Colonic mucosa (tissue), 4 donors: ENCODE measurements at regions of chr3 and their contacts with region 1.

Region 1: GRCh38 chr3:132730891-132731580 is 8.8 kb upstream of the NPHP3 start:
- DNase-seq: no peak
- H3K4me3 ChIP-seq: no peak overlapping the region
- H3K27ac ChIP-seq: no peak overlapping the region
- H3K4me1 ChIP-seq: no peaks in the 10 kb centered on the region
- H3K27me3 ChIP-seq: no peaks in the 10 kb centered on the region
- CTCF ChIP-seq: no peak

Region 2: DNA sequence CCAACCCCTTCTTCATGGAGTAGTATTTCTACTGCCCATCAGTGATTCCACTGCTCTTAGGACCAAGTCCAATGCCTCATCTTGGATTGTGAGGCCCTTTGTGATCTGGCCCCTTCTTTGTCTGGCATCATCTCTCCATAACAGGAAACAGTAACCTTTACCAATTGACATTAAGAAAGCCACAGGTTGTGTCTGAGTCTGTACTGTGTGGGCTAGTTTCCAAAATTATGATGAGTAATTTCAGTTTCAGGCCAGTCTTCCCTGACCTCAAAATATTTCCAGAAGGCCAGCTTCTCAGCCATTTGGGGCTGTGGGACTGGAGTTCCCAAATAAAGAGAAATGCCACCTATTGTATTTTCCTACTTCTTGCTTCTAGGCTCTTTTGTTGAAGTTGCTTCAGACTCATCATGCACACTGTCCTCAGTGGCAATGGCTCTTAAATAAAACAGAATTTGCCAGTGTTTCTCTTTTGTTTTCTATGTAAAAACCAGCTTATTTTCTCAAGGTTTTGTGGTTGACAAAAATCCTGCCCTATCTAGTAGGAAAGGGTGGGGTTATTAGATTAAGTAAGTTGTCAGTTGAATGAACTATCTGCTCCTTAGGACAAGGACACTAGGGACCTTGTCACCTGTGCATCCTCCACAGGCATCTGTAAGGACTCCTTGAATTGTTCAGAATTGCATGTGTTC is 181.0 kb before region 1 on chr3:
- intact Hi-C with region 1: no loop called
- DNase-seq: no peak
- H3K4me3 ChIP-seq: no peak overlapping the region
- H3K27ac ChIP-seq: no peak overlapping the region
- H3K4me1 ChIP-seq: no peaks in the 10 kb centered on the region
- H3K27me3 ChIP-seq: no peaks in the 10 kb centered on the region
- CTCF ChIP-seq: no peak

Region 3: GRCh38 chr3:133384331-133385027 is 653.4 kb after region 1 on chr3:
- intact Hi-C with region 1: loop called (anchors 10 kb)
- DNase-seq: peak; percentile 30
- H3K4me3 ChIP-seq: no peak overlapping the region
- H3K27ac ChIP-seq: no peak overlapping the region
- H3K4me1 ChIP-seq: no peaks in the 10 kb centered on the region
- H3K27me3 ChIP-seq: no peaks in the 10 kb centered on the region
- CTCF ChIP-seq: peak; percentile 39

Region 4: DNA sequence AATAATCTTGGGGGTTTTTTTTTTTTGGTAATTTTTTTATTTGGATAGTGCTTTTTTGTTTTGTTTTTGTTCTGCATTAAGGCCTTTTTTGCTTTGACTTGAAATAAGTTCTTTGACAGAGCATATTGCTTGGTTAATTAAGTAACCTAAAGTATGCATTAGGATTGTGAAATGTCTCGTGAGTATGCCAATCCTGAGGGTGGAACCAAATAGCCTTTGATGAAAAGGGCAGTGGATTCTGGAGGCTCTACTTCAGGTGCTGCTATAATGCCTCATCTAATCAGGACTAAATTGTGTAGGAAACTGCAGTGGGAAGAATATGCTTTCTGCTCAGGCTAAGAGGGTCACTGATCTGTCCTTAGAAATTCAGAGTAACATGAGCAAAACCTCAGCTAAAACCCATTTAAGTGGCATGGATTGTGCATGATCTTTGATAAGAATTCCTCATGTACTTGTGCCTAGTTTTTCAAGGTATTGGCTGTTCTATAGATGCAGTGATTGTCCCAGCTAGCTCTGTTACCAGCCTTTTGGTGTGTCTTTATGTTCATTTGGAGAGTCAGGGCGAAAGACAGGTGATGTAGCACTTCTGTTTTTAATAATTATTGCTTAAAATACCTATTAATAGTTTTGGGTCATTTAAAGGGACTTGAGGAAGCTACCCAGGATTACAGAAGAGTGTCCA is 857.9 kb after region 1 on chr3:
- intact Hi-C with region 1: loop called (anchors 10 kb)
- DNase-seq: no peak
- H3K4me3 ChIP-seq: no peak overlapping the region
- H3K27ac ChIP-seq: no peak overlapping the region
- H3K4me1 ChIP-seq: no peaks in the 10 kb centered on the region
- H3K27me3 ChIP-seq: no peaks in the 10 kb centered on the region
- CTCF ChIP-seq: no peak